Activated CD4-positive, alpha-beta T cell treated with anti-CD3 and anti-CD28 coated beads, Interleukin-2, amount 10 ng/mL, durations not matched to agents 24 days and 14 days (primary cell): ENCODE measurements at regions of chr15 and their contacts with region 1.

Region 1: DNA sequence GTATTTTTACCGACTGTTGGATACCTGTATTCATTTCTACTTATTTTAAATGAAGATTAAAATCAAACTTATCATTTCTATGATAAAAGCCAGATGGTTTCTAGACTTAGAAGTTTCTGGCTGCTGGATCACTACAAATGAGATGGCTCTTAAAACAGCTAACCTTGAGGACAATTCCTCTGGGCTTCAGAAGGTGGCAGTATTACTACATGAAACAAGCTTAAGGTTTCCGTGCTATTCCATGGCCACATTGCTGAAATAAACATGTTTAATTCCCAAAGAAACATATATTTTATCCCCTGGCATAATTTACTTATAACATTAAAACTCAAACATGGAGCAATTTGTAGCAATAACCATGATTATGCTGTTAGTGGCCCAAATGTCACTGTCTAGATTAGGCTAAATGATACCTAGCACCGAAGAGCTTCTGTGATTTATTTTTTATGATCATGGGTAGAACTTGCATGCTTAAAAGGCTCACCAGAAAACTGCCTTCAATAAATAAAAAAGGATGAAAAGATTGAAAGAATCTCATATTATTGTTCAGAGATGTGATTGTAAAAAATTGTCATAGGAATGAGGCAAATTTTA is 204.0 kb upstream of the NANOGP8 start:
- DNase-seq: no peak
- H3K4me3 Mint-ChIP-seq: no peak overlapping the region
- H3K27ac Mint-ChIP-seq: no peak overlapping the region
- H3K4me1 Mint-ChIP-seq: no peaks in the 10 kb centered on the region
- H3K27me3 Mint-ChIP-seq: no peaks in the 10 kb centered on the region

Region 2: DNA sequence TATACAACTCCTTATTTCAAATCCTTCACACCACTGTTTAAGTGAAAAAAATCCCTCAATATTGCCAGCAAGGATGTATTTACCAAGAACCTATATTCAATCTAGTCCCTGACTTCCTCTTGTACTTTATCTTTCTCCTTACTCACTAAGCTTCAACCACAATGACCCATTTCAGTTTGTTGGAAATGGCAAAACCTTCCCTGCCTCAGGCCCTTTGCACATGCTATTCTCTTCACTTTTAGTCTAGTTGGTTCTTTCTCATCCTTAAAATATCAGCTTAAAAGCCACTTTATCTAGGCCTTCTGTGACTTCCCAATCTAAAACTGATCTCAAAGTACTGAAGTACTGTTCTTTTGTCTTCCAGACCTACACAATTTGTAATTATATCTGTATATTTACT is 412.5 kb before region 1 on chr15:
- intact Hi-C with region 1: no loop called
- DNase-seq: no peak
- H3K4me3 Mint-ChIP-seq: no peak overlapping the region
- H3K27ac Mint-ChIP-seq: no peak overlapping the region
- H3K4me1 Mint-ChIP-seq: no peaks in the 10 kb centered on the region
- H3K27me3 Mint-ChIP-seq: no peaks in the 10 kb centered on the region

Region 3: GRCh38 chr15:35444557-35445204 is 155.6 kb after region 1 on chr15:
- intact Hi-C with region 1: loop called (anchors 2 kb)
- DNase-seq: no peak
- H3K4me3 Mint-ChIP-seq: no peak overlapping the region
- H3K27ac Mint-ChIP-seq: no peak overlapping the region
- H3K4me1 Mint-ChIP-seq: no peaks in the 10 kb centered on the region
- H3K27me3 Mint-ChIP-seq: no peaks in the 10 kb centered on the region